Esophagus muscularis mucosa (tissue), 4 donors: ENCODE measurements at regions of chr4 and their contacts with region 1.

Region 1: GRCh38 chr4:8274765-8275547 is 5.4 kb downstream of the HTRA3 start:
- DNase-seq: peak; percentile 97
- H3K4me3 ChIP-seq: peak overlapping the region in 1 of 4 donors; percentile 27
- H3K27ac ChIP-seq: peak overlapping the region; percentile 72 to 81 (median 78)
- H3K4me1 ChIP-seq: peaks cover 65 to 100% (median 100%) of the 10 kb centered on the region in 4 donors
- H3K27me3 ChIP-seq: peaks cover 0 to 7% (median 0%) of the 10 kb centered on the region in 4 donors
- CTCF ChIP-seq: peak; percentile 45 to 72 (median 61)
- EP300 ChIP-seq: no peak
- POLR2A ChIP-seq: no peak

Region 2: GRCh38 chr4:8101213-8102075 is 173.5 kb before region 1 on chr4:
- intact Hi-C with region 1: no loop called
- DNase-seq: no peak
- H3K4me3 ChIP-seq: no peak overlapping the region
- H3K27ac ChIP-seq: peak overlapping the region in 3 of 4 donors; percentile 5 to 51 (median 44)
- H3K4me1 ChIP-seq: peaks cover 8 to 36% (median 32%) of the 10 kb centered on the region in 4 donors
- H3K27me3 ChIP-seq: no peaks in the 10 kb centered on the region
- CTCF ChIP-seq: no peak
- EP300 ChIP-seq: peak; percentile 40
- POLR2A ChIP-seq: no peak

Region 3: DNA sequence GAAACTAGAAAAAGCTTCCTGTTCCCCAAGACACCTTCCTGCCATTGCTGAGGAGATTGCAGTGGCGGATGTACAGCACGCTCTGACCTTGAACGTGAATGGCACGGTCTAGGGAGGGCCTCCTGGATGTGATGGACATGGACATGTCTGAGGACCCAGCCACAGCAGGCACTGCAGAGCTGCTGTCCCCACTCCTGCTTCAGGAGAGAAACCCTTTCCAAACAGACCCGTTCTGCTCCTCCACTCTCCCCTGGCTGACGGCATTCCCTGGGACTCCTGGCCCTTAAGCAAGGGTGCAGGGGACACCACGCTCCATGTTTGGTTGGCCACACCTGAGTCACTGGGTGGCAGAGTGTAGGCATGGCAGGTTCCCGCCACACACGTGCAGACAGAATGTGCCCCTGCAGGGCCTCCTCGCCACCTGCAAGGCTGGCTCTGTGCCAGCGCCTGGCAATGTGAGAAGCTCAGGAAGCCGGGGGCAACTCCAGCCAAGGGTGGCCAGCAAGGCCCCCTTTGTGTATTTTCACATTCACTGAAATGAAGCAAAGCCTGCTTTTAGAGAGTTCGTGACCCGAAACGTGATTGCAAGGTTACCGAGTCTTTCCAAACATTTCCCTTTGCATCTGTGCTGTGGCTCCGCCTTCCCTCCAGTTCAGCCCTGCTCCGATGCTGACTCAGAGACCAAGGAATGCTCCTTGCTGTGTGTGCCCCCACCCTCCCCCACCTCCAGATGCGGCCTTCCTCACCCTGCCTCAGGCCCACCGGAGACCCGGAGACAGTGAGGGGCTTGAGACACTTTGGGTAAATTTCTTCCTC is 40.7 kb after region 1 on chr4:
- intact Hi-C with region 1: loop called (anchors 5 kb)
- DNase-seq: no peak
- H3K4me3 ChIP-seq: peak overlapping the region in 1 of 4 donors; percentile 30
- H3K27ac ChIP-seq: peak overlapping the region; percentile 56 to 69 (median 64)
- H3K4me1 ChIP-seq: peaks cover 31 to 48% (median 42%) of the 10 kb centered on the region in 4 donors
- H3K27me3 ChIP-seq: no peaks in the 10 kb centered on the region
- CTCF ChIP-seq: peak in 1 of 3 experiments; percentile 20
- EP300 ChIP-seq: no peak
- POLR2A ChIP-seq: no peak